ENCODE measurements at regions of chr12 and their contacts with region 1.

Region 1: GRCh38 chr12:15669256-15669948 is 119.8 kb downstream of the EPS8 start:
- DNase-seq: no peak
- ATAC-seq: no peak
- H3K4me3 ChIP-seq: no peak overlapping the region
- H3K27ac ChIP-seq: no peak overlapping the region
- H3K4me1 ChIP-seq: no peaks in the 10 kb centered on the region
- H3K27me3 ChIP-seq: no peaks in the 10 kb centered on the region
- CTCF ChIP-seq: no peak
- EP300 ChIP-seq: no peak
- POLR2A ChIP-seq: no peak
- RAD21 ChIP-seq: no peak

Region 2: GRCh38 chr12:15293731-15294130 is 375.7 kb before region 1 on chr12:
- CTCF ChIA-PET with region 1: no interaction called
- POLR2A ChIA-PET with region 1: no interaction called
- RAD21 ChIA-PET with region 1: no interaction called
- SMC1A ChIA-PET with region 1: no interaction called
- in situ Hi-C with region 1: no loop called
- intact Hi-C with region 1: no loop called
- DNase-seq: no peak
- ATAC-seq: no peak
- H3K4me3 ChIP-seq: no peak overlapping the region
- H3K27ac ChIP-seq: no peak overlapping the region
- H3K4me1 ChIP-seq: no peaks in the 10 kb centered on the region
- H3K27me3 ChIP-seq: no peaks in the 10 kb centered on the region
- CTCF ChIP-seq: no peak
- EP300 ChIP-seq: no peak
- POLR2A ChIP-seq: no peak
- RAD21 ChIP-seq: no peak

Region 3: GRCh38 chr12:15601210-15601800 is 68.1 kb before region 1 on chr12:
- CTCF ChIA-PET with region 1: no interaction called
- POLR2A ChIA-PET with region 1: no interaction called
- RAD21 ChIA-PET with region 1: no interaction called
- SMC1A ChIA-PET with region 1: no interaction called
- in situ Hi-C with region 1: no loop called
- intact Hi-C with region 1: no loop called
- DNase-seq: no peak
- ATAC-seq: no peak; the same call in 1 of the 3 replicates
- H3K4me3 ChIP-seq: no peak overlapping the region
- H3K27ac ChIP-seq: no peak overlapping the region
- H3K4me1 ChIP-seq: no peaks in the 10 kb centered on the region
- H3K27me3 ChIP-seq: no peaks in the 10 kb centered on the region; a peak in 1 of 4 replicates
- CTCF ChIP-seq: no peak
- EP300 ChIP-seq: no peak
- POLR2A ChIP-seq: no peak
- RAD21 ChIP-seq: no peak

Region 4: DNA sequence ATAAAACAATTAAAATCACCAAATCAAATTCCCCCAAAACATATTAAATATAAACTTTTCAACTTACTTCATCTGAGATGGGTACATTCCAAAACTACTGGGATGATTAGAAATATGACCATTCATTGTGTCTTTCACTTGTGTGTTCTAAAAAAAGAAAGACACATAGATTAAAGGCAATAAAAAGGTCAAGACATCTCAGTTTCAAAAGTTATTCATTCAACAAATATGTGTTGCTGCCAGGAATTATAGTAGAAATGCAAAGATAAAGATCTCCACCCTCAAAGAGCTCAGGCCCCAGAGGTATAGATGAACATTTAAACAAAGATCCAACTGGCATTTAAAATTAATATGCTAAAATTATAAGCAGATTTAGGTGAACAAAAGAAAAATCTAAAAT is 13.4 kb after region 1 on chr12:
- CTCF ChIA-PET with region 1: interaction called, 11 read pairs
- POLR2A ChIA-PET with region 1: interaction called, 7 read pairs
- RAD21 ChIA-PET with region 1: interaction called, 3 read pairs
- SMC1A ChIA-PET with region 1: interaction called, 26 read pairs
- in situ Hi-C with region 1: no loop called
- intact Hi-C with region 1: no loop called
- DNase-seq: no peak
- ATAC-seq: peak; percentile 49
- H3K4me3 ChIP-seq: no peak overlapping the region
- H3K27ac ChIP-seq: no peak overlapping the region
- H3K4me1 ChIP-seq: no peaks in the 10 kb centered on the region
- H3K27me3 ChIP-seq: no peaks in the 10 kb centered on the region
- CTCF ChIP-seq: no peak
- EP300 ChIP-seq: no peak
- POLR2A ChIP-seq: no peak
- RAD21 ChIP-seq: no peak

Region 5: GRCh38 chr12:15688202-15688736 is 18.9 kb after region 1 on chr12:
- CTCF ChIA-PET with region 1: interaction called, 11 read pairs
- POLR2A ChIA-PET with region 1: interaction called, 7 read pairs
- RAD21 ChIA-PET with region 1: interaction called, 3 read pairs
- SMC1A ChIA-PET with region 1: interaction called, 26 read pairs
- in situ Hi-C with region 1: no loop called
- intact Hi-C with region 1: no loop called
- DNase-seq: no peak
- ATAC-seq: peak; percentile 85
- H3K4me3 ChIP-seq: no peak overlapping the region
- H3K27ac ChIP-seq: no peak overlapping the region
- H3K4me1 ChIP-seq: 0 out of 2 replicates have a peak, but pooled peaks cover 7% of the 10 kb centered on the region
- H3K27me3 ChIP-seq: no peaks in the 10 kb centered on the region
- CTCF ChIP-seq: no peak
- EP300 ChIP-seq: no peak
- POLR2A ChIP-seq: no peak
- RAD21 ChIP-seq: no peak

Region 6: GRCh38 chr12:16150291-16150690 is 480.9 kb after region 1 on chr12:
- CTCF ChIA-PET with region 1: no interaction called
- POLR2A ChIA-PET with region 1: no interaction called
- RAD21 ChIA-PET with region 1: no interaction called
- SMC1A ChIA-PET with region 1: no interaction called
- in situ Hi-C with region 1: no loop called
- intact Hi-C with region 1: no loop called
- DNase-seq: no peak
- ATAC-seq: no peak
- H3K4me3 ChIP-seq: no peak overlapping the region
- H3K27ac ChIP-seq: no peak overlapping the region
- H3K4me1 ChIP-seq: no peaks in the 10 kb centered on the region
- H3K27me3 ChIP-seq: no peaks in the 10 kb centered on the region
- CTCF ChIP-seq: no peak
- EP300 ChIP-seq: no peak
- POLR2A ChIP-seq: no peak
- RAD21 ChIP-seq: no peak

Measured in GM12878 (cell line).